Activated T-helper 2 cell treated with anti-CD3 and anti-CD28 coated beads, Interferon-gamma antibody, Interleukin-2, Interleukin-4, amounts not matched to agents 10 μg/mL and 5 μg/mL and 100 μg/mL, durations not matched to agents 14 hours and 24 hours and 36 hours (primary cell): ENCODE measurements at regions of chr12 and their contacts with region 1.

Region 1: GRCh38 chr12:9869307-9870161 is at the start of gene CLEC2B:
- DNase-seq: peak; percentile 26
- H3K4me3 Mint-ChIP-seq: peak within 1 kb of the TSS; percentile 85
- H3K27ac Mint-ChIP-seq: peak within 1 kb of the TSS; percentile 91
- H3K4me1 Mint-ChIP-seq: peaks cover 29% of the 10 kb centered on the region
- H3K27me3 Mint-ChIP-seq: no peaks in the 10 kb centered on the region
- total RNA-seq, gene CLEC2B: 5.0 and 5.1 TPM in 2 replicates

Region 2: DNA sequence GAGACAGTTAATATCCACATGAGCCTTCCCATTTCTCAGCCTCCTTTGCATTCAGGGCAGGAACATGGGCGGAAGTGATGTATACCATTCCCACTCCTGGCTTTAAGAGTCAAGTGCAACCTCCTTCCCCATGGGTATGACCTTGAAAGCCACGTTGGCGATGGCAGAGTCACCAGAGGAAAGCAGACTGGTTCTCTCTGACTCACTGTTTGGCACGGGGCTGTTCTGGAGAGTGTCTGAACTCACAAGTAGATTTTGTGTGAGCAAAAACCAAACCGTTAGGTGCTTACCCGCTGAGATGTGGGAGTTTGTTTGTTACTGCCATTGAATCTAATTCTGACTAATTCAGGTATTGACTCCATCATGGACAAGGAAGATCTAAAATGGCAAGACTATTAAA is 624.6 kb before region 1 on chr12:
- intact Hi-C with region 1: loop called (anchors 10 kb)
- DNase-seq: peak; percentile 13
- H3K4me3 Mint-ChIP-seq: no peak overlapping the region
- H3K27ac Mint-ChIP-seq: peak overlapping the region; percentile 95
- H3K4me1 Mint-ChIP-seq: peaks cover 39% of the 10 kb centered on the region
- H3K27me3 Mint-ChIP-seq: peaks cover 11% of the 10 kb centered on the region

Region 3: GRCh38 chr12:9647825-9648700 is 221.5 kb before region 1 on chr12:
- intact Hi-C with region 1: loop called (anchors 2 kb)
- DNase-seq: peak; percentile 95
- H3K4me3 Mint-ChIP-seq: peak overlapping the region; percentile 94
- H3K27ac Mint-ChIP-seq: peak overlapping the region; percentile 96
- H3K4me1 Mint-ChIP-seq: peaks cover 46% of the 10 kb centered on the region
- H3K27me3 Mint-ChIP-seq: no peaks in the 10 kb centered on the region

Region 4: GRCh38 chr12:9813821-9814809 is 55.4 kb before region 1 on chr12:
- intact Hi-C with region 1: loop called (anchors 2 kb)
- DNase-seq: peak; percentile 88
- H3K4me3 Mint-ChIP-seq: peak overlapping the region; percentile 83
- H3K27ac Mint-ChIP-seq: peak overlapping the region; percentile 56
- H3K4me1 Mint-ChIP-seq: peaks cover 20% of the 10 kb centered on the region
- H3K27me3 Mint-ChIP-seq: peaks cover 18% of the 10 kb centered on the region

Region 5: GRCh38 chr12:9948606-9949296 is 79.2 kb after region 1 on chr12:
- intact Hi-C with region 1: loop called (anchors 2 kb)
- DNase-seq: no peak
- H3K4me3 Mint-ChIP-seq: peak overlapping the region; percentile 23
- H3K27ac Mint-ChIP-seq: peak overlapping the region; percentile 53
- H3K4me1 Mint-ChIP-seq: peaks cover 57% of the 10 kb centered on the region
- H3K27me3 Mint-ChIP-seq: no peaks in the 10 kb centered on the region